ENCODE measurements at regions of chr9 and their contacts with region 1.

Region 1: DNA sequence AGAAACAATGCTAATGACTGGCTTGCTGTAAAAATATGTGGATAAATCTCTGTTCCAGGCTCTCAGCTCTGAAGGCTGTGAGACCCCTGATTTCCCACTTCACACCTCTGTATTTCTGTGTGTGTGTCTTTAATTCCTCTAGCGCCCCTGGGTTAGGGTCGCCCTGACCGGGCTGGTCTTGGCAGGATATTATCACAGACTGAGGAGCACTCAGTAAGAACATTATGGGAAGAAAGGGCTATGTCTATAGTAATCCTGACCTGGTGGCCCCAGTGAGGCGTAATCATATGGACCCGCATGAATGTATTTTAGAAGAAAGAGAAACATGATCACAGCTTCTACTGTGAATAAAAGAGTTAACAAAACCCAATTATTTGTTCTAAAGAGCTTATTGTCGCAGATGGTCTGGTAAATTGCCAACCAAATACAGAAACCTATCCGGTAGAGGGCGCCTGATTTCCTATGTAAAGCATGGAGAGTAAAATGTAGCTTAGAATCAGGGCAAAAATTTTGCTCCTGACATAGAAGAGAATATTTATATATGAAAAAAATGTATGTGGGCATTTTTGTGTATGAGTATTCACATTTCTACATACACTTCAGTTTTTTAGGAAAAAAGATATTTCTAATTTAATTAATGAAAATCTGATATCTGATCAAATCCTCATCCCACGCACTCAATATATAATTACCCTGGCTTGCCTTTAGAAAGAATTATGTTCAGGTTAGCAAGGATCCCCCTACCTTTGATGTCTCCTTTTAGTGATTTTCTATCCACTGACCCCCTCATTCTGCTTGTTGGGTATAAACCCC is 5.8 kb upstream of the IFNA1 start:
- DNase-seq: peak; percentile 25
- CTCF ChIP-seq: peak; percentile 56

Region 2: DNA sequence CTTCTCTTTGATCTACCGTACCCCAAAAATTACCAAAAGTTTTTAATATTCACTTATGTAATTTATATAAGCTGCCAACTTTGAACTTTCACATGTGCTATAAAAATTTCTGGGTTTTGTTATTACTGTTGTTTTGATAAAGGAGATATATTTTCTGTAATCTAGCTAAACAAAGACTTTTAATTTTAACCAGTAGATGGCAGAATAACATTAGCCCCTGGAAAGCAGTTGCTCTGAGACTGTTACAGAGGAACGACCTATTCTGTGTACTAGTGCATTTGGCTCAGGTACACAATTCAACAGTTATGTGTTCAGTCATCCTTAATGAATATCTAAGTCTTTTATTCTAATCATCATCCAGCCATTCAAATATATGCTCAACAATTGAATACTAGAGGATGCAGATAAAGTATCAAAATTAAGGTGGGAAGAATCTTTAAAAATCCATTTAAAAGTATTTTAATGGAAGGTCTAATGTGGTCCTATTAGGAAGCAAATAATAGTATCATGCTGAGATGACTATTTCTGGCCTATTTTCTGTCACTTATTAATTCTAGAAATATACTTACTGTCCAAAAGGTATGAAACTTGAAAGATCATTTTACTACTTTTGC is 107.8 kb before region 1 on chr9:
- CTCF ChIA-PET with region 1: interaction called, 15 read pairs
- POLR2A ChIA-PET with region 1: no interaction called
- DNase-seq: peak; percentile 49
- CTCF ChIP-seq: peak; percentile 35

Region 3: DNA sequence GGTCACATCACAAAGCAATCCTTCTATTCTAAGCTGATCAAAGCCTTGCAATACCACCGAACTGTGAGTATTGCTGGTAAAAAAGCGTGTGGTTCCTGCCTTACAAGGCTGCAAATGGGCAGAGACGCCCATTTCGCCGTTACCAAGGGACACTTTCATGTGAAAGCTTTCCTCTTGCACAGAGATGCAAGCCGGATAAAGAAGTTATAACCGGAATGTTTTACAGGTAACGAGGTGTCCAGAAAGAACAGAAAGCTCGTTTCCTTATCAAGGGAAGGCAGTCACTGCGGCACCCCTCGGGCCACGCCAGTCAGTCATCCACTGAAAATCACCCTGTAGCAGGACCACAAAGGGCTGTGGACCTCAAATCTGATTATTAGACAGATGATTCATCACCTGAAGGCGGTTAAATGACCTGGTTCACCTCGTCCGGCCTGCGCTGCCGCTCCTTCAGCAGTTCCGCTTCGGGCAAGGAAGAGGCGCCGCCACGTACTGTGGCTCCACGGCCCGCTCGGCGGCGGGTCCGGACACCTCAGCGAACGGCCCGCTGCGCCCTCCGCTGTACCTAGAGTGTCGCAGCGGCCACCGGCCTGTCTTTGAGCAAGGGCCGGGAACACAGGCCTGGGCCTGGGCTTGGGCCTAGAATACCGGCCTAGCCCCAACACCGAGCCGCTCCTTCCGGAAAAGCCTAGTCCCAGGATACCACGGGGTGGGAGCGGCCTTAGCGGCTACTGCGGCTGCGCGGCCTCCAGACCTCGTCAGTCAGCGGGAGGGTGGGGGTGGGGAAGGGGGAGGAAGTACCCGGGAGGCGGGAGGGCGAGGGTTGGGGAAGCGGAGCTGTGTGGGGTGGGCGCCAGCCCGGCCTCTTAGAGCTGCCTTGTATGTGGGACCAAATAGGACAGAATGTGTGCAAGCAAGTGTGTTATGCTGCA is 99.4 kb before region 1 on chr9 and contains the start of gene KLHL9:
- CTCF ChIA-PET with region 1: interaction called, 12 read pairs
- POLR2A ChIA-PET with region 1: no interaction called
- DNase-seq: peak; percentile 93
- CTCF ChIP-seq: no peak